Activated CD4-positive, alpha-beta memory T cell treated with anti-CD3 and anti-CD28 coated beads for 36 hours (primary cell): ENCODE measurements at regions of chr11 and their contacts with region 1.

Region 1: GRCh38 chr11:44621140-44621681 is 55.7 kb downstream of the CD82 start:
- DNase-seq: peak; percentile 75
- H3K4me3 Mint-ChIP-seq: no peak overlapping the region
- H3K27ac Mint-ChIP-seq: peak overlapping the region; percentile 9
- H3K4me1 Mint-ChIP-seq: peaks cover 36% of the 10 kb centered on the region
- H3K27me3 Mint-ChIP-seq: no peaks in the 10 kb centered on the region

Region 2: DNA sequence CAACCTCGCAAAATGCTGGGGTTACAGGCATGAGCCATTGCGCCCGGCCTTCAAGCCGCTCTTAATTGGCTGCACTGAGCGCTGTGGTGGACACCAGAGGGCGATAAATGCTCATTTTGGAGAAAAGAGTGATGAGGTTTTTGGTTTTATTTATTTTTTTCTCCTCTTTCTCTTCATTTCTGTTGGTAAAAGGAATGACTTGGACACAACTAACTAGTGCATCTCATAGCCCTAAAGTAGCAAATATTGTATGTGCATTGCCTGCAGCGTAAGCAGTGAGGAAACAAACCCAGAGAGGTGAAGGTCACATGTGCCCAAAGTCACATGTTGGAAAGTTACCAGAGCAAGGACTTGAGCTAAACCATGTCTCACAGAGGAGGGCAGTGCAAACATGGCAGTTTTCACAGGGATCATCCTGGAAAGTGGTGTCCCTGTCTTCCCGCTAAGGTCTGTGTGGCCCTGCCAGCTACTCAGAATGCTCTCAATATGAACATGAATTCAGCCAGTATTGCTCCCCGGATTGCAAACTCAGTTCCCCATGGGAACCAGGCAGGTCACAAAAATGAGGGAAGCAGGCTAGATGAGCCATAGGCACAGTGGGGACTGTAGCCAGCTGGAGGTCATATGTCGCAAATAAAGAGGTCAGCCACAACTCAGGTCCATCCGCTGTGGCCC is 64.3 kb before region 1 on chr11:
- CTCF ChIA-PET with region 1: interaction called, 576 read pairs
- POLR2A ChIA-PET with region 1: no interaction called
- intact Hi-C with region 1: loop called (anchors 1 kb)
- DNase-seq: peak; percentile 79
- H3K4me3 Mint-ChIP-seq: no peak overlapping the region
- H3K27ac Mint-ChIP-seq: no peak overlapping the region
- H3K4me1 Mint-ChIP-seq: peaks cover 29% of the 10 kb centered on the region
- H3K27me3 Mint-ChIP-seq: no peaks in the 10 kb centered on the region

Region 3: GRCh38 chr11:44583036-44583669 is 38.1 kb before region 1 on chr11:
- CTCF ChIA-PET with region 1: interaction called, 33 read pairs
- POLR2A ChIA-PET with region 1: no interaction called
- intact Hi-C with region 1: no loop called
- DNase-seq: no peak
- H3K4me3 Mint-ChIP-seq: no peak overlapping the region
- H3K27ac Mint-ChIP-seq: peak overlapping the region; percentile 10
- H3K4me1 Mint-ChIP-seq: peaks cover 61% of the 10 kb centered on the region
- H3K27me3 Mint-ChIP-seq: no peaks in the 10 kb centered on the region

Region 4: DNA sequence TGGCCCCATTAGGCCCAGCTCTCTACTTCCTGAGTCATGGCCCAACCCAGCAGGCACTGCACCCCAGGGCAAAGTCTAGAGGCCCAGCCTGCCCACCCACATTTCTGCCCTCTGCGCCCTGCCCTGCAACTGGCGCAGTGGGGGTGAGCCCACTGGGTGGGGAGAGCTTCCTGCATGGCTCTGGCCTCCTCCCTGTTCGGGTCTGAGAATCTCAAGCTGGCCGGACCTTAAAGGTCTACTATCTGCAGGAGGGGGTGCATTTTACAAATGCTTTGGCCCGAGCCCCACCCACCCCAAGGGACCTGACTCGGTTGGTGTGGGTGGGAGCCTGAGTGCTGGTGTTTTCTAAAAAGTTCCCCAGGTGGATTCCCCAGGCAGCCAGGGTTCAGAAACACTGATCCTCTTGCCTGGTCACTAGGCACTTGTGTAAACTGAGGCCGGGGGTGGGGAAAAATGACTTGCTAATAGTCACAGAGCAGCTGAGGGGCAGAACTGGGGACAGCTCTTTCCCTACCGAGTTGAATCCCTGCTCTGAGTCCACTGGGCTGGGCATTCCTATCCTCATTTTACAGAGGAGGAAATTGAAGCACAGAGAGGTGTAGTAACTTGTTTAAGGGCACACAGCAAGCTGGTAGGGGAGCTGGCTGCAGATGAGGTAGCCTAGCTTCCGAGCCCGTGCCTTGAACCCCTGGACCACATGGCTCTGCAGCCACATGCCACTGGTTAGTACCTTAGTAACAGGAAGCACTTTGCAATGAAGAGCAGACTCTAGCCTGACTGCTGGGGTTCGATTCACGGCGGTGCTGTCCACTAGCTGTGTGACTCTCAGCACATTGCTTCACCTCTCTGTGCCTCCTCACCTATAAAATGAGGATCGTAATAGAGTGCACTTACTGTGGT is 19.5 kb before region 1 on chr11:
- CTCF ChIA-PET with region 1: interaction called, 22 read pairs
- POLR2A ChIA-PET with region 1: no interaction called
- intact Hi-C with region 1: no loop called
- DNase-seq: peak; percentile 54
- H3K4me3 Mint-ChIP-seq: peak overlapping the region; percentile 8
- H3K27ac Mint-ChIP-seq: peak overlapping the region; percentile 78
- H3K4me1 Mint-ChIP-seq: peaks cover 65% of the 10 kb centered on the region
- H3K27me3 Mint-ChIP-seq: no peaks in the 10 kb centered on the region

Region 5: GRCh38 chr11:44893846-44894617 is 272.8 kb after region 1 on chr11:
- CTCF ChIA-PET with region 1: interaction called, 8 read pairs
- POLR2A ChIA-PET with region 1: no interaction called
- intact Hi-C with region 1: loop called (anchors 5 kb)
- DNase-seq: peak; percentile 72
- H3K4me3 Mint-ChIP-seq: no peak overlapping the region
- H3K27ac Mint-ChIP-seq: no peak overlapping the region
- H3K4me1 Mint-ChIP-seq: peaks cover 9% of the 10 kb centered on the region
- H3K27me3 Mint-ChIP-seq: no peaks in the 10 kb centered on the region